ENCODE measurements at regions of chr11 and their contacts with region 1.

Region 1: DNA sequence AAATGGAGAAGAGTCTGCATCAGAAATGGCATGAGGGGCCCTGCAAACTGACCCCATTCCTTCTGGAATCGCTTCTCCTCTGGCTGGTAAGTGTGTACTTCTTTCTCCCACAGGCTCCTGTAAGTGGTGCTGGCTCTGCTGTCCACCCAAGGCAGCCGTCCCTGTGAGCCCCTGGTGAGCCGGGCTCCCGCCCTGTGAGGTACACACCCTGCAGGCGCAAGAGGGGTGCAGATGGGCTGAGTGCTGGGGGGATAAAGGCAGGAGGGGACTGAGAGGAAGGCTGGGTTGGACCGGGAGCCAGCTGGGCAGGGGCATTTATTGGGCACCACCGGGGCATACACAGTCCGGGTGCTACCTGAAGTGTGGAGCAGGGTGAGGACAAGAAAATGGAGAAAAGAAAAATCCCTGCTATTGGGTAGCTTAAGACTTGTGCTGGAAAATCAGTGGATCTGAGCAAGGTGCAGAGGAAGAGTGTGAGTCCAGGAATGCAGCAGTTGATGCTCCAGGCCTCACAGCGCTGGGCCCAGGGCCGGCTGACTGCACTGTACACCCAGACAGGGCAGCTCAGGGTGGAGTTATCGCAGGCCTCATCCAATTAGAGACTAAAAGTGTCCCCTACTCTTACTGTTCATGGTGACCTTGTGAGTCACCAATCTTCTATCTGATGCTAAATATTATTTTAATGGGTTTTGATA is 455.1 kb upstream of the B3GAT1 start:
- DNase-seq: no peak
- ATAC-seq: no peak
- H3K4me3 ChIP-seq: no peak overlapping the region
- H3K27ac ChIP-seq: no peak overlapping the region
- H3K4me1 ChIP-seq: no peaks in the 10 kb centered on the region
- H3K27me3 ChIP-seq: no peaks in the 10 kb centered on the region; a peak in 2 of 4 replicates
- CTCF ChIP-seq: no peak
- EP300 ChIP-seq: no peak
- POLR2A ChIP-seq: no peak
- RAD21 ChIP-seq: no peak

Region 2: GRCh38 chr11:134360050-134360835 is 506.9 kb before region 1 on chr11:
- CTCF ChIA-PET with region 1: no interaction called
- POLR2A ChIA-PET with region 1: no interaction called
- RAD21 ChIA-PET with region 1: no interaction called
- SMC1A ChIA-PET with region 1: no interaction called
- in situ Hi-C with region 1: no loop called
- intact Hi-C with region 1: loop called (anchors 5 kb)
- DNase-seq: no peak
- ATAC-seq: peak; percentile 98
- H3K4me3 ChIP-seq: no peak overlapping the region
- H3K27ac ChIP-seq: no peak overlapping the region
- H3K4me1 ChIP-seq: no peaks in the 10 kb centered on the region
- H3K27me3 ChIP-seq: no peaks in the 10 kb centered on the region; a peak in 1 of 4 replicates
- CTCF ChIP-seq: peak; percentile 75 to 89 (median 81)
- EP300 ChIP-seq: no peak
- POLR2A ChIP-seq: no peak
- RAD21 ChIP-seq: peak; percentile 83

Region 3: GRCh38 chr11:134662629-134663360 is 204.3 kb before region 1 on chr11:
- CTCF ChIA-PET with region 1: no interaction called
- POLR2A ChIA-PET with region 1: no interaction called
- RAD21 ChIA-PET with region 1: no interaction called
- SMC1A ChIA-PET with region 1: no interaction called
- in situ Hi-C with region 1: no loop called
- intact Hi-C with region 1: no loop called
- DNase-seq: no peak
- ATAC-seq: no peak
- H3K4me3 ChIP-seq: no peak overlapping the region
- H3K27ac ChIP-seq: no peak overlapping the region
- H3K4me1 ChIP-seq: no peaks in the 10 kb centered on the region
- H3K27me3 ChIP-seq: no peaks in the 10 kb centered on the region
- CTCF ChIP-seq: no peak
- EP300 ChIP-seq: no peak
- POLR2A ChIP-seq: no peak
- RAD21 ChIP-seq: no peak

Region 4: GRCh38 chr11:135043434-135043833 is 176.3 kb after region 1 on chr11:
- CTCF ChIA-PET with region 1: no interaction called
- POLR2A ChIA-PET with region 1: no interaction called
- RAD21 ChIA-PET with region 1: no interaction called
- SMC1A ChIA-PET with region 1: no interaction called
- in situ Hi-C with region 1: no loop called
- intact Hi-C with region 1: no loop called
- DNase-seq: no peak
- ATAC-seq: no peak
- H3K4me3 ChIP-seq: no peak overlapping the region
- H3K27ac ChIP-seq: no peak overlapping the region
- H3K4me1 ChIP-seq: no peaks in the 10 kb centered on the region
- H3K27me3 ChIP-seq: no peaks in the 10 kb centered on the region
- CTCF ChIP-seq: no peak
- EP300 ChIP-seq: no peak
- POLR2A ChIP-seq: no peak
- RAD21 ChIP-seq: no peak

Measured in GM12878 (cell line).